MCF 10A (cell line): ENCODE measurements at regions of chr2 and their contacts with region 1.

Region 1: GRCh38 chr2:191218292-191218898 is 26.8 kb upstream of the MYO1B start:
- DNase-seq: peak; percentile 87
- H3K4me3 Mint-ChIP-seq: no peak overlapping the region
- H3K27ac Mint-ChIP-seq: peak overlapping the region; percentile 82
- H3K4me1 Mint-ChIP-seq: peaks cover 38% of the 10 kb centered on the region
- H3K27me3 Mint-ChIP-seq: no peaks in the 10 kb centered on the region
- CTCF ChIP-seq: peak; percentile 51

Region 2: GRCh38 chr2:191165176-191165643 is 53.2 kb before region 1 on chr2:
- CTCF ChIA-PET with region 1: interaction called, 13 read pairs
- POLR2A ChIA-PET with region 1: no interaction called
- intact Hi-C with region 1: loop called (anchors 1 kb)
- DNase-seq: peak; percentile 71
- H3K4me3 Mint-ChIP-seq: no peak overlapping the region
- H3K27ac Mint-ChIP-seq: no peak overlapping the region
- H3K4me1 Mint-ChIP-seq: peaks cover 36% of the 10 kb centered on the region
- H3K27me3 Mint-ChIP-seq: no peaks in the 10 kb centered on the region
- CTCF ChIP-seq: peak; percentile 51

Region 3: DNA sequence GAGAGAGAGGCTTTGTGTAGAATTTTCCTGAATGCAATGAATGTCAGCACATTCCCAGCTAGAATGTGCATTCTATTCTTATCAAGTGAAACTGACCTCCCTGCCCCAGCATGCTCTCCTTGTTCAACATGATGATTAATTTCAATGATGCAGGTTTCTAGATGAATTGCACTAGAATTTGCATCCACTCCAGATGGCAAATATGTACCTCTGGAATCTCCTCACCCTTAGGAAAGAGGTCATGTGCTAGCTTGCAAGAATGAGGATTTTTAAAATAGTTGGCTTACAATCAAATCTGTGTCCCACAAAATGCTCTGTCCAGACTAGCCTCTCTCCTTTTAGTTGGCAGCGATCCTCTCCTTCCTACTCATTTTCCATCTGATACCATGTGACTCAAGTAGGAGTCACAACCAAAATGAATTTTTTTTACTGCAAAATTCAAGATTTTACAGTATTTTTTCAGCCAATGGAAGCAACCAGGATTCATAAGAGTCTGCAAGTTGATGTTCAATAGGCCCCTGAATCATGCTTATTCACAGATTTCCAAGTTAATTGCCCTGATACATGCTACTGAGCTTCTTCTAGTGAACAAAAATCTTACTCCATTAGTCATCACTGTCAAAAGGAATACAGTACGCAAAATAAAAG is 46.6 kb before region 1 on chr2:
- CTCF ChIA-PET with region 1: interaction called, 13 read pairs
- POLR2A ChIA-PET with region 1: interaction called, 12 read pairs
- intact Hi-C with region 1: loop called (anchors 1 kb)
- DNase-seq: peak; percentile 98
- H3K4me3 Mint-ChIP-seq: peak overlapping the region; percentile 33
- H3K27ac Mint-ChIP-seq: peak overlapping the region; percentile 79
- H3K4me1 Mint-ChIP-seq: peaks cover 61% of the 10 kb centered on the region
- H3K27me3 Mint-ChIP-seq: no peaks in the 10 kb centered on the region
- CTCF ChIP-seq: no peak

Region 4: DNA sequence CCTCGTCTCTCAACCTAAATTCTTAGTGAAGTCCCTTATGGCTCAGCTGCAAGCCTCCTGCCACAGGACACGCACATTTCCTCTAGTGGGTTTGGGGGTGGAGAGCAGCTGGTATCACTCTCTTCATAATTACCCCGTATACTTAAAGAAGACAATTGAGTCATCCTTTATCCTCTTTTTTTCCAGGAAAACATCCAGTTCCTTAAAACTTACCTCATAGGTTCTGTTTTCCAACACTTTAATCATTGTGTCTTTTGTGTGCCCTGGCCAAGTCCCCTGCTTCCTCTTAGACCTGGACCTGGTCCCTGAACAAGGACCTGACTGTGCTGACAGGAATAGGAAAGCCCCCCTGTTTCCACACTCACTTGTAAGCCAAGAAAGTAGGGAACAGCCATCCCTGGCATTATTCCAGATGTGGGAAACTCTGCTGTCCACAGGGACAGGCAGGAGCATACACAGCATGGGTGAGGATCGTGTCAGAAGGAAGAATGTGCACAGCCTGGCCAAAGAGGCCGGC is 15.5 kb before region 1 on chr2:
- CTCF ChIA-PET with region 1: interaction called, 10 read pairs
- POLR2A ChIA-PET with region 1: interaction called, 17 read pairs
- intact Hi-C with region 1: no loop called
- DNase-seq: peak; percentile 69
- H3K4me3 Mint-ChIP-seq: peak overlapping the region; percentile 49
- H3K27ac Mint-ChIP-seq: peak overlapping the region; percentile 98
- H3K4me1 Mint-ChIP-seq: peaks cover 23% of the 10 kb centered on the region
- H3K27me3 Mint-ChIP-seq: no peaks in the 10 kb centered on the region
- CTCF ChIP-seq: no peak

Region 5: GRCh38 chr2:191376981-191377629 is 158.7 kb after region 1 on chr2:
- CTCF ChIA-PET with region 1: interaction called, 4 read pairs
- POLR2A ChIA-PET with region 1: interaction called, 3 read pairs
- intact Hi-C with region 1: loop called (anchors 5 kb)
- DNase-seq: peak; percentile 92
- H3K4me3 Mint-ChIP-seq: no peak overlapping the region
- H3K27ac Mint-ChIP-seq: peak overlapping the region; percentile 57
- H3K4me1 Mint-ChIP-seq: peaks cover 23% of the 10 kb centered on the region
- H3K27me3 Mint-ChIP-seq: no peaks in the 10 kb centered on the region
- CTCF ChIP-seq: no peak

Region 6: DNA sequence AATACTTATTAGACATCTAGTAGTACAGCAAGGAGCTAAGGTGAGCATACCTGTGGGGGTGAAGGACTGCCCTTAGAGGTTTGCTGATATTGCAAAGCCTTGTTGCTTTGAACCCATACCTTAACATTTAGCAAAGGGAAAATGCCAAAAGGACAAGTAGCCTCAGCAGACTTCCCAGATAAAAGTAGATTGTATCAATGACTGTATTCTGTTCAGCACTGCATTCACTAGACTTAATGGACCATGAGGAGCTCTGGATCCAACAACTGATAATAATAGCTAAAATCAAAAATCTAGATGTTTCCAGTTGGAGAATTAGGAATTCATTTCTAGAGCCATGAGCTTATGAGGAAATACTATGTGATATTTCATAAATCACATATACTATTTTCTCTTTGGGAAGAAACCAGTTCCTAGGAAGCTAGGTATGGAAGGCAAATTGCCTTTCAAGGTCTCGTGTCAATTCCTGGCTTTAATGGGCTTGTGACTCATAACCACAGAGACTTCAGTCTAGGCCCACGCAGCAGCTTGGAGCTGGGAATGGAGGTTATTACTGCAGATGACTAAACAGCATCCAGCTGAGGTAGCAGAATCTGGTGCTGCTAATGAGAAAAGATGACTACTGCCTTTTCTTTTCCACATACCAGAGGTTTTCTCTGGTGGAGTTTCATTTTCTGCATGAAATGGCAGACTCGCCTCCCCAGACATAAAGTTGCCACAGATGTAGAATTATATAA is 268.4 kb after region 1 on chr2:
- CTCF ChIA-PET with region 1: interaction called, 11 read pairs
- POLR2A ChIA-PET with region 1: interaction called, 3 read pairs
- intact Hi-C with region 1: no loop called
- DNase-seq: peak; percentile 95
- H3K4me3 Mint-ChIP-seq: no peak overlapping the region
- H3K27ac Mint-ChIP-seq: peak overlapping the region; percentile 3
- H3K4me1 Mint-ChIP-seq: peaks cover 11% of the 10 kb centered on the region
- H3K27me3 Mint-ChIP-seq: no peaks in the 10 kb centered on the region
- CTCF ChIP-seq: no peak